Activated B cell treated with CpG ODN at 0.5 μM for 24 hours (primary cell): ENCODE measurements at regions of chr14 and their contacts with region 1.

Region 1: GRCh38 chr14:69666690-69667239 is 55.4 kb downstream of the SUSD6 start:
- DNase-seq: no peak
- ATAC-seq: no peak
- H3K4me3 Mint-ChIP-seq: peak overlapping the region; percentile 62
- H3K27ac Mint-ChIP-seq: peak overlapping the region; percentile 84
- H3K4me1 Mint-ChIP-seq: peaks cover 98% of the 10 kb centered on the region
- H3K27me3 Mint-ChIP-seq: no peaks in the 10 kb centered on the region
- CTCF ChIP-seq: no peak

Region 2: DNA sequence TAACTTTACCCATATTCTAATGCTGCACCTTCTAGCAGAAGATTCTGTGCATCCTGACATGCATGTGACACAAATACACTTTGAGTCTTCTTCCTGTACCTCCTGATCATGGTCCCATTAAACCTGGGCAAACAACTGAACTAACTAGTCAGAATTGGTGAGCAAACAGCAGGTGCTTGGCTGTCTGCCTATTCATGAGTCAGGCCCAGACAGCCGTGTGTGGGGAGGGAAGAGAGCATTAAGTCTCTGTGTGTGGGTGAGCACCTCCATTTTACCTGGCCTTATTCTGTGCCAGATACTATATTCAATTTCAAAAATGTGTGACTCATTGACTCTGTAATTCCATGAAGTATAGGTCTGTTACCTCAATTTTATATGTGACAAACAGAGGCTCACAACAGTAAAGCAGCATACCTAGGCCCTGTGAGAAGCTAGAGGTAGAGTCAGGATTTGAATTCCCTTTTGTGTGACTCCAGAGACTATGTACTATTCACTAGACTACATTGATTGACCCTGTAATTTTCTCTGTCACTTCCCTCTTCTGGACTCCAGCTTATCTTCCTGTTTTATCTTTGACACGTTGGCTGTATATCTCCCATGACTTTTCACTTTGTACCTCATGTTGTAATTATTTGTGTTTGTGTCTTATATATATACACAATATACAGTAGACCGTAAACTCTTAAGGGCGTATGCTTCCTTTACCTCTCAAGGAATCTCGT is 23.2 kb before region 1 on chr14:
- CTCF ChIA-PET with region 1: no interaction called
- POLR2A ChIA-PET with region 1: interaction called, 8 read pairs
- intact Hi-C with region 1: loop called (anchors 2 kb)
- DNase-seq: no peak
- ATAC-seq: no peak
- H3K4me3 Mint-ChIP-seq: peak overlapping the region; percentile 52
- H3K27ac Mint-ChIP-seq: peak overlapping the region; percentile 85
- H3K4me1 Mint-ChIP-seq: peaks cover 91% of the 10 kb centered on the region
- H3K27me3 Mint-ChIP-seq: no peaks in the 10 kb centered on the region
- CTCF ChIP-seq: no peak

Region 3: GRCh38 chr14:69652942-69653684 is 13.7 kb before region 1 on chr14:
- CTCF ChIA-PET with region 1: no interaction called
- POLR2A ChIA-PET with region 1: interaction called, 9 read pairs
- intact Hi-C with region 1: loop called (anchors 1 kb)
- DNase-seq: no peak
- ATAC-seq: peak; percentile 74
- H3K4me3 Mint-ChIP-seq: peak overlapping the region; percentile 61
- H3K27ac Mint-ChIP-seq: peak overlapping the region; percentile 88
- H3K4me1 Mint-ChIP-seq: peaks cover 95% of the 10 kb centered on the region
- H3K27me3 Mint-ChIP-seq: no peaks in the 10 kb centered on the region
- CTCF ChIP-seq: no peak

Region 4: DNA sequence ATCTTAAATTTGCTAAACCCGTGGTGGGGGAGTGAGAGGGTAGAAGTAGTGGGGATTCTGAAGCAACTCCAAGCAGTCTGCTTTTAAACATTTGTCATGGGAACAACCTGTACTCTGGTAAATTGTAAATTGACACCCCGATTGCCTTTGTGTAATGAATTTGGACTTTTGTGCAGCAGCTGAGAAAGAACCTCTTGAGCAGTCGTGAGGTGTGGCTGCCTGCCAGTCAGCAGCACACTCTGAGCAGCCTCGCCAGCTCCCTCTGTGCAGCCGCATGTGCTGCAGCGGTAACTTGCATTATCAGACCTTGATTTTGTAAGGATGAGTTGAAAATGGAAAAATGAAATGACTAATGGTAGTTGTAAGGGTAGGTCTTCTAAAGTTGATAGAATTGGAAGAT is 19.0 kb after region 1 on chr14:
- CTCF ChIA-PET with region 1: no interaction called
- POLR2A ChIA-PET with region 1: interaction called, 8 read pairs
- intact Hi-C with region 1: loop called (anchors 2 kb)
- DNase-seq: no peak
- ATAC-seq: no peak
- H3K4me3 Mint-ChIP-seq: peak overlapping the region; percentile 6
- H3K27ac Mint-ChIP-seq: peak overlapping the region; percentile 81
- H3K4me1 Mint-ChIP-seq: peaks cover 80% of the 10 kb centered on the region
- H3K27me3 Mint-ChIP-seq: no peaks in the 10 kb centered on the region
- CTCF ChIP-seq: no peak